ENCODE measurements at regions of chr17 and their contacts with region 1.

Region 1: DNA sequence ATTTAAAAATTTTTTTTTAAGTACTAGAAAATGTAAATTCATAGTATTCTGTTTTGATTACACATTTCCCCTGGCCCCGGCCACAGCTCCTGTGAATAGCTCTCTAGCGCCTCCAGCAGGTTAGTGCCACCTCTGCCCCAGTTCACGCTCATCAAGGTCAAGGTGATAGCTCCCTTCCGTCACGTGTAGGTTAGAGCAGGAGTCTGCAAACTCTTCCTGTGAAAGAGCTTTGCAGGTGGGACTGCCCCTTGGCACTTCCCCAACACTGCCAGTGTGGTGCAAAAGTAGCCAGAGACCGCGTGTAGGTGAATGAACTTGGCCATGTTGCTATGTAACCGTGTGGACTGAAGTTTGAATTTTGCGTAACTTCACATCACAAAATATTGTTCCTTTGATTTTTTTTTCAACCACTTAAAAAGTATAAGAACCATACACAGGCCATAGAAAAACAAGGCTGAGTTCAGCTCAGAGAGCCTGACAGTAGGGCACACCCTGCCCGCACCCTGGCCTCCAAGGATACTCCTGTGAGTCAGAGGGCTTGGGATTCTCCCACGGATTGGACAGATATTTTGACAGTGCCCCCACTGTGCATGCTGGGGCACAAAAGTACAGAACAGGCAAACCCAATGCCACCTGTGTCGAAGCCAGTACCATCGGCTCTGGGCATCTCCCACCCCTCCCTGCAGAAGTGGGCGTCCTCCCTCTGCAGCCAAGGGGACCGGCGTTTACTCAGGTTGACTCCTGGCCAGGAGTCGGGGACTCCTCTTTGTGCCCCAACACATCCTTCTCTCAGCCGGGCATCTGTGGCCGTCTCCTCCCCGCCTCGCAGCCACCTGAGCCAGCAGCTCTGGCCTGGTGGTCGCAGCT is 92.0 kb upstream of the CHMP6 start:
- DNase-seq: peak; percentile 88
- ATAC-seq: peak; percentile 87
- H3K4me3 Mint-ChIP-seq: no peak overlapping the region
- H3K27ac Mint-ChIP-seq: peak overlapping the region; percentile 49
- H3K4me1 Mint-ChIP-seq: peaks cover 52% of the 10 kb centered on the region
- H3K27me3 Mint-ChIP-seq: no peaks in the 10 kb centered on the region
- CTCF ChIP-seq: peak; percentile 93

Region 2: GRCh38 chr17:80426681-80427326 is 472.8 kb before region 1 on chr17:
- CTCF ChIA-PET with region 1: interaction called, 19 read pairs
- POLR2A ChIA-PET with region 1: no interaction called
- intact Hi-C with region 1: no loop called
- DNase-seq: peak; percentile 86
- ATAC-seq: peak; percentile 98
- H3K4me3 Mint-ChIP-seq: no peak overlapping the region
- H3K27ac Mint-ChIP-seq: no peak overlapping the region
- H3K4me1 Mint-ChIP-seq: peaks cover 11% of the 10 kb centered on the region
- H3K27me3 Mint-ChIP-seq: no peaks in the 10 kb centered on the region
- CTCF ChIP-seq: peak; percentile 94

Region 3: DNA sequence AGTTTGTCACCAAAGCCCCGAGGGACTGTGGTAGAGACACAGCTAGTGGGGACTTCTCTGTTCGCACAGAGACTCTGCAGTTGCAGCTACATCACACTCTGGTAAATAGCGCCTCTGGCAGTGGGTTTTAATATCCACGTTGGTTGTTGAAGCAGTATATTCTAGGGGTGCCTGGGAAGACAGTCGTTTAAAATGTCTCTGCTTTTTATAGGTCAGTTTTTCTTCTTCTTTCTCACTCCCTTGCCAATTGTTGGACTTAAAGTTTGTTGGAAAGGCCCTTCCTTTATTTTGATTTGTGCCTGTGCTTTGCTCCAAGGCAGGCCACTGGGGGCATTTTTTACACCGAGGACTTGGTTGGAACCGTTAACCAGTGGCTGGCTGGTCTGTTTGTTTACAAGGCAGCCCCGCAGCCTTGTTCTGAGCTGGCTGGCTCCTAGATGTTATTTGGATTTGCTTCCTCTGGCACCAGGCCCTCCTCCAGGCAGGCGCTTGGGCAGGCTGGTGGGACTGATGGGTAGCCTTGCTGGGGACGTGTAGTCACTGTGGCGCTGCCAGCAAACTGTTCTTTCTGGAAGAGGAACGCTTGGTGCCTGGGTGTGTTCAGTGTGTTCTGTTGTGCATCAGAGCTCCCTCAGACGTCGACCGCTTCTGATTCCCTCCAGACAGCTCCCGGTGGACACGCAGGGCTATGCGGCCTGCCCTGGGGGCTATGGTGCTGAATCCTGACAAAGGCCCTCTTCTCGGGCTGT is 126.2 kb before region 1 on chr17:
- CTCF ChIA-PET with region 1: interaction called, 14 read pairs
- POLR2A ChIA-PET with region 1: no interaction called
- intact Hi-C with region 1: no loop called
- DNase-seq: peak; percentile 29
- ATAC-seq: peak; percentile 47
- H3K4me3 Mint-ChIP-seq: no peak overlapping the region
- H3K27ac Mint-ChIP-seq: peak overlapping the region; percentile 95
- H3K4me1 Mint-ChIP-seq: peaks cover 64% of the 10 kb centered on the region
- H3K27me3 Mint-ChIP-seq: no peaks in the 10 kb centered on the region
- CTCF ChIP-seq: no peak

Region 4: DNA sequence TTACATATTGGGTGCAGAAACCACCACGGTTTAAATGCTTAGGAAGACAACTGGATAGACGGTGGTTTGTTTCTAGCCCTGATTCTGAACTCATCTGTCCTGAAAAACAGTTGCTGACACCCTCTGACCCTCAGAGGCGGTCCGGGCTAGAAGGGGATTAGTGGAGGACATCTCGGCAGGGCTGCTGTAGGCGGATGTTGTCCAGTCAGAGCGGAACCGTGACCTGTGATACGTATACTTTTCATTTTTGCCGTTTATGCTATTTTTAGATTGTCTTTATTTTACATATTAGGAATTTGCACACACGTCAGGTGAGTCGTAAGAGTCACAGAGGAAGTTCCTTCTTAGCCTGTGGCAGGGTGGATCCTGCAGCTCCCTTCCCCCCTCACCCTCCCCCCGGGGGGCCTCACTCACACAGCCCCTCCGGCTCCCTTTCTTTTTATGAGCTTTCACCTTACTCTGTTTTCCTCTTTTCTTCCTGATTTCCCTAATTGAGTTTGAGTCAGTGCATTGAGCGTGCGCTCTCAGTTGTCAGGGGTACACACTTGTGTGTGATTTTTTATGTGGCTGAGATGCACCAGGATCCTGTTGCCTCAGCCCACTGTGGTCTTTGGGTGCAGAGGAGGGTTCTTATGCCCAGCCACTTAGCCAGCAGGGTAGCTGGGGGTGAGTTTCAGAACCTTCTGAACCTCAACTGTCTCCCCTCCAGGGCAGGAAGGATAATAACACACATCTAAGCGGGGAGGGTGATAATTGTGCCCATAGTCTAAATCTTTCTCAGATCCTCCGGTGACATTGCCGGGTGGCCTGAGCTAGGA is 119.0 kb before region 1 on chr17:
- CTCF ChIA-PET with region 1: interaction called, 17 read pairs
- POLR2A ChIA-PET with region 1: no interaction called
- intact Hi-C with region 1: loop called (anchors 10 kb)
- DNase-seq: peak; percentile 63
- ATAC-seq: peak; percentile 54
- H3K4me3 Mint-ChIP-seq: peak overlapping the region; percentile 60
- H3K27ac Mint-ChIP-seq: peak overlapping the region; percentile 91
- H3K4me1 Mint-ChIP-seq: peaks cover 80% of the 10 kb centered on the region
- H3K27me3 Mint-ChIP-seq: no peaks in the 10 kb centered on the region
- CTCF ChIP-seq: no peak

Region 5: DNA sequence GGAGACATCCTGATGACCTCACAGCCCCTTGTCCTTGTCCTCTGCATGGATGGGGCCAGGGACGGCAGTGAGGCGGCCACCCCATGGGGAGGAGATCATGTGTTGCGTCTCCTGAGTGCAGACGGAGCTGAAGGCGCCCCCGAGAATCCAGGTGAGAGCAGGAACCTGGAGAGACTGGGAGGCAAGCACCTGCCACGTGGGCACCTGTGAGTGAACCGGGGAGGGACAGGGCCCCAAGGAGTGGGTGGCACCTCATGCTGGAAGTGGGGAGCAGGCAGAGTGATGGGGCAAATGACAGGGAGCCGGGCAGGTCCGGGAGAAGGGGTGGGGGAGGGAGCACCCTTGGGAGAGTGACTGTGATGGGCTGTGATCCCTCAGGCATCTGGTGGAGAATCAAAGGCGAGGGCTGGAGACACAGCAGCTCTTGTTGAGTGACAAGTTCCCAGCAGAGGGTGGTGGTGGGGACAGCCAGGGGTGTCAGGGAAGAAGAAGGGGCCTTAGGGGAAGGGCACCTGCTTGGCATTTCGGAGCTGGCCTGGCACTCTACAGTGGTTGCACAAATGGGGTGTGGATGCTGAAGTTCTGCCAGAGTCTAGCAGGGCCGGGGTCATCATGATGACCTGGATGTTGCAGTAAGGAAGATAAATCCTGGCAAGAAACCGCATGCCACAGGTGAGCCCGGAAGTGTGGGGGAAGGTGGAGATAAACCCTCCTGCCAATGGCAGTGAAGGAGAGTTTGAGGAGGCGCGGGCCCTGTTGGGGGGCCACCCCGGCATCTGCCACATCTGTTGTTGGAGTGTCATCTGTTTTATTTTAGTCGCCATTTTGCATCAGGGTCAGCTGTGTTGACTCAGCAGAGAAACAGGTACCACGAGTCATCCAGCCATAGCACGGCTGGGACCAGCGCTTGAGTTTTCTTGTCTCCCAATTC is 82.0 kb before region 1 on chr17:
- CTCF ChIA-PET with region 1: interaction called, 10 read pairs
- POLR2A ChIA-PET with region 1: no interaction called
- intact Hi-C with region 1: no loop called
- DNase-seq: no peak
- ATAC-seq: no peak
- H3K4me3 Mint-ChIP-seq: no peak overlapping the region
- H3K27ac Mint-ChIP-seq: peak overlapping the region; percentile 9
- H3K4me1 Mint-ChIP-seq: peaks cover 33% of the 10 kb centered on the region
- H3K27me3 Mint-ChIP-seq: no peaks in the 10 kb centered on the region
- CTCF ChIP-seq: no peak

Region 6: DNA sequence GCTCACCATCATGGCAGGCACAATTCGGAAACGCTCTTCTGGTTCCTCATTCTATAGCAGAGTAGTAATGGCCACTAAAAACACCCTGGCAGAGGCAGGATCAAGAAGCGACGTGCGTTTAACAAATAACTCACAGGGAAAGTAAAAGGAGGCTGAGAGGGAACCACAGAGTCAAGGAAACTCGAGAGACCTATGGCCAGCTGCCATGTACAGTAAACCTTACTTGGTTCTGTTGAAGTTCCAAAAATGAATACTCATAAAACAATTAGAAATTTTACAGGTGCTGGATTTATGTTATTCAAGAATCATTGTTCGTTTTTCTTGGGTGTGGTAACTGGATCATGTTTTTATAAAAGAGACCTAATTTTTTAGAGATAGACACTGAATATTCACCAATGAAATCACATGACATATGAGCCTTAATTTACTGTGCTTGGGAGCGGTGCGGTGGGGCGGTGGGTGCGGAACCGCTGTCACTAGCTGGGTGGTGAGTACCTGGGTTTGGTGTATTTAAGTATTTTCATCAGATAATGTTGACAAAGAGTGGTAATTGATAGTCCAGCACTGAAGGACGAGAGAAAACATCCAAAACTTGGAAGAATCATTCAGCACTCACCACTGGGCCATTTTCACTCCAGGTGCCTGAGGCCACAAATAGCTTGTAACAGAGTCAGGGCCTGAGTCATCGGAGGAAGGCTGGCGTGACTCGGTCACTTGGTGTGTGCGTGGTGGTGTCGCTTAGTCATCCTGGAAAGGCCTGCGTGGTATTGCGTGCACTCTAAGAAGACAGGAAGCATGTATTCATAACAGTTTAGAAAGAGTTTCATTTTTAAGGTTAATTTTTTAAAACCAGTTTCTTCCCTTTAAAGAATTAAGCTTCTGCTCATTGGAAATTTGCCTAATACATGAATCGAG is 43.4 kb before region 1 on chr17:
- CTCF ChIA-PET with region 1: interaction called, 10 read pairs
- POLR2A ChIA-PET with region 1: interaction called, 4 read pairs
- intact Hi-C with region 1: loop called (anchors 5 kb)
- DNase-seq: peak; percentile 97
- ATAC-seq: peak; percentile 97
- H3K4me3 Mint-ChIP-seq: peak overlapping the region; percentile 41
- H3K27ac Mint-ChIP-seq: peak overlapping the region; percentile 98
- H3K4me1 Mint-ChIP-seq: peaks cover 62% of the 10 kb centered on the region
- H3K27me3 Mint-ChIP-seq: no peaks in the 10 kb centered on the region
- CTCF ChIP-seq: no peak

Measured in activated CD8-positive, alpha-beta T cell treated with anti-CD3 and anti-CD28 coated beads for 36 hours (primary cell).